PC-9 (cell line): ENCODE measurements at regions of chr2 and their contacts with region 1.

Region 1: GRCh38 chr2:48248241-48248933 is 281.6 kb upstream of the STON1 start:
- DNase-seq: peak; percentile 30 to 87
- H3K4me3 ChIP-seq: no peak overlapping the region
- H3K27ac ChIP-seq: peak overlapping the region; percentile 65
- H3K4me1 ChIP-seq: peaks cover 18% of the 10 kb centered on the region
- H3K27me3 ChIP-seq: no peaks in the 10 kb centered on the region
- CTCF ChIP-seq: no peak

Region 2: GRCh38 chr2:47640356-47640755 is 608.0 kb before region 1 on chr2:
- CTCF ChIA-PET with region 1: interaction called, 15 read pairs
- POLR2A ChIA-PET with region 1: no interaction called
- intact Hi-C with region 1: no loop called
- DNase-seq: no peak
- H3K4me3 ChIP-seq: no peak overlapping the region
- H3K27ac ChIP-seq: no peak overlapping the region
- H3K4me1 ChIP-seq: peaks cover 21% of the 10 kb centered on the region
- H3K27me3 ChIP-seq: no peaks in the 10 kb centered on the region
- CTCF ChIP-seq: no peak

Region 3: GRCh38 chr2:48292393-48292792 is 44.0 kb after region 1 on chr2:
- CTCF ChIA-PET with region 1: no interaction called
- POLR2A ChIA-PET with region 1: no interaction called
- intact Hi-C with region 1: no loop called
- DNase-seq: no peak
- H3K4me3 ChIP-seq: no peak overlapping the region
- H3K27ac ChIP-seq: no peak overlapping the region
- H3K4me1 ChIP-seq: no peaks in the 10 kb centered on the region
- H3K27me3 ChIP-seq: no peaks in the 10 kb centered on the region
- CTCF ChIP-seq: no peak

Region 4: DNA sequence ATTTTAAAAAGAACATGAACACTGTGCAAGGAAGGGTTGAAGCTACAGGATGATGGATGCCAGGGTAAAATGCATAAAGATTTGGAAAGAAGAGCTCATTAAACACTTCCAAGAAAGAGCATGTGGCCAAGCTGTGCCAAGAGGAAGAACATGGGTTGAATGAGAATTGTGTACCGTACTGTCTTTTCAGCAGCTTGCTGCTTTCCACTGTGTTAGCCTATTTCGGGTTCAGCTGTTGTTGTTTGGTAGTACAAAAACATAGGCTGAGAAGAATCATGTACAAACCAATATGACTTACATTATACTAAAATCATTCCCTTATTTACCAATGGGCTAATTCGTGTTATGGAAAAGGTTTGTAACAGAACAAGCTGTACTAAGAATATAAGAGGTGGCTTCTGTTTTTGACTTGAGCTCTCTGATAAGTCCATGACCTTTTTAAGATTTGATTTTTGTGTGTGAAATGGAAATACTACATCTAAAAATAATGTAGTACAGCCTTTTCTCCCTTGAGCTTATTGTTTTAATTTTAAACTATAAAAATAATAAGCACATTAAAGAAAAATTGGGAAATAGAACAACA is 93.3 kb after region 1 on chr2:
- CTCF ChIA-PET with region 1: no interaction called
- POLR2A ChIA-PET with region 1: no interaction called
- intact Hi-C with region 1: no loop called
- DNase-seq: no peak
- H3K4me3 ChIP-seq: no peak overlapping the region
- H3K27ac ChIP-seq: no peak overlapping the region
- H3K4me1 ChIP-seq: peaks cover 15% of the 10 kb centered on the region; the same call in 1 of the 2 replicates
- H3K27me3 ChIP-seq: no peaks in the 10 kb centered on the region
- CTCF ChIP-seq: no peak

Region 5: DNA sequence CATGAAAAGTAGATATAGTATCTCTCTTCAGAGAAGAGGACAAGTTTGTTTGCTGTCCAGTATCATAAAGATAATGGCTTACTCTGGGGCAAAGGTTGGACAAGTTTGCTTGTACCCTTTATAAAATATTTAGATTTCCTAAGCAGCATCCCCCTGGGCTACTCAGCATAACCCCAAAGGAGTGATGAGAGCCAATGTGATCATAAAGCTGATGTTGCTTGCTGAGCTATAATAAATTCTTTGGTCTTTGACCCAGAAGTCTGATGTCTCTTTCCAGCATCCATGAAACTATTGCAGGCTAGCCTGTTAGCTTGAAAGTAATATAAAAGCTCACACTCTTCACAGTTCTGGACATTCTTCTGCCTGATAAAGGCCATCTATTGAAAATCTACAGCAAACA is 143.2 kb after region 1 on chr2:
- CTCF ChIA-PET with region 1: interaction called, 15 read pairs
- POLR2A ChIA-PET with region 1: no interaction called
- intact Hi-C with region 1: no loop called
- DNase-seq: no peak
- H3K4me3 ChIP-seq: no peak overlapping the region
- H3K27ac ChIP-seq: no peak overlapping the region
- H3K4me1 ChIP-seq: no peaks in the 10 kb centered on the region
- H3K27me3 ChIP-seq: no peaks in the 10 kb centered on the region
- CTCF ChIP-seq: no peak